ENCODE measurements at regions of chr22 and their contacts with region 1.

Region 1: GRCh38 chr22:35409783-35410662 is 10.1 kb downstream of the MCM5 start:
- DNase-seq: peak; percentile 90
- H3K4me3 ChIP-seq: peak overlapping the region; percentile 50
- H3K27ac ChIP-seq: peak overlapping the region; percentile 90
- H3K4me1 ChIP-seq: peaks cover 80% of the 10 kb centered on the region
- CTCF ChIP-seq: no peak

Region 2: GRCh38 chr22:35399678-35400334 is 10.2 kb before region 1 on chr22 and contains the start of gene MCM5:
- CTCF ChIA-PET with region 1: interaction called, 3 read pairs
- POLR2A ChIA-PET with region 1: interaction called, 13 read pairs
- intact Hi-C with region 1: no loop called
- DNase-seq: peak; percentile 99
- H3K4me3 ChIP-seq: peak within 1 kb of the TSS; percentile 79
- H3K27ac ChIP-seq: peak within 1 kb of the TSS; percentile 86
- H3K4me1 ChIP-seq: peaks cover 67% of the 10 kb centered on the region
- CTCF ChIP-seq: no peak
- total RNA-seq, gene MCM5: 178 and 242 TPM in 2 replicates